Right ventricle myocardium inferior (tissue), 1 donor: ENCODE measurements at regions of chr3 and their contacts with region 1.

Region 1: DNA sequence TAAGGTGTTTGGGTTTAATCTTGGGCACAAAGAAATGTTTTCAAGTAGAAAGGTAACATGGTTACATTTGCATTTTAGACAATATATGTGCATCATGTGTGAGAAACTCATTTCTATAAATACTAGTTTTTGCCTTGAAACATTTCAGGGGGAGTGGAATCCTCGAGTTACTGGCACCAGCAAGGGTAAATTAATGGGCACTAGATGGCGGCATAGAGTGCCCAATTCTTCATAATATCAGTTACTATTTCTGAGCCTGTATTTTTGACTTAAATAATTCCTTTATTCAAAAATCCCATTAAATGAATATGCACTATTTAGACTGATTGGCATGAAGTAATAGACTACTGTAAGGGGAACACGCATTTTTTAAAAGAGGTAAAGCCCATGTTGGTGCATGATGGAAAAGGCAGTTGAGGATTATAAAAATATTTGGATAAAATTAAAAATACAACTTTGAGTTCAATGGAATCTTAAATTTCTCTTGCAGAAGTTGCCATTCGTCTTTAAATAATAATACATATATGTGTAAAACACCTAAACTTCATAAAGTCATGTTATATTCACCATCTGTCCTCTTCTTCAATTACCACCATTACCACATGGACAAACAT is 106.3 kb downstream of the ZBTB20 start:
- DNase-seq: no peak
- ATAC-seq: no peak

Region 2: DNA sequence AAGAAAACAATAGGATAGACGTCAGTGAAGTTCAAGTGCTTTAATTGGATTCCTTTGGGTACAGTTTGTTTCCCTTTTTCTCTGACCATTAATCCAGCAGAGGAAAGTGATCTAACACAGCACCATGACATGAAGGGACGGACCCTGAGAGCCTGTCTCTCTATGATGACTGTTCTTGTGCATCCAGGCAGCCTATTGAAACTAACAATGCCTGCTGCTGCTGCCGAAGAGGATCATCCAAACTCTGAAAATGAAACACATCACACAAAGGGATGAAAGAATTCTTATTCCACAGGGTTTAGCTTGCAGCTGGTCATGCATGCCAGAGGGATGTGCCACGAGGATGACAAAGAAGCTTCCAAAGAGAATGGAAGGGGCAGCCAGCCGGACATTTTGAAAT is 30.8 kb after region 1 on chr3:
- intact Hi-C with region 1: loop called (anchors 2 kb)
- DNase-seq: no peak
- ATAC-seq: no peak